Sciatic nerve (tissue), 2 donors: ENCODE measurements at regions of chr14 and their contacts with region 1.

Region 1: GRCh38 chr14:23320774-23321571 is at the start of gene PABPN1:
- DNase-seq: peak; percentile 99
- ATAC-seq: peak; percentile 98
- total RNA-seq, gene PABPN1: 135 TPM

Region 2: GRCh38 chr14:21891921-21892320 is 1429.1 kb before region 1 on chr14:
- intact Hi-C with region 1: no loop called
- DNase-seq: no peak
- ATAC-seq: no peak

Region 3: DNA sequence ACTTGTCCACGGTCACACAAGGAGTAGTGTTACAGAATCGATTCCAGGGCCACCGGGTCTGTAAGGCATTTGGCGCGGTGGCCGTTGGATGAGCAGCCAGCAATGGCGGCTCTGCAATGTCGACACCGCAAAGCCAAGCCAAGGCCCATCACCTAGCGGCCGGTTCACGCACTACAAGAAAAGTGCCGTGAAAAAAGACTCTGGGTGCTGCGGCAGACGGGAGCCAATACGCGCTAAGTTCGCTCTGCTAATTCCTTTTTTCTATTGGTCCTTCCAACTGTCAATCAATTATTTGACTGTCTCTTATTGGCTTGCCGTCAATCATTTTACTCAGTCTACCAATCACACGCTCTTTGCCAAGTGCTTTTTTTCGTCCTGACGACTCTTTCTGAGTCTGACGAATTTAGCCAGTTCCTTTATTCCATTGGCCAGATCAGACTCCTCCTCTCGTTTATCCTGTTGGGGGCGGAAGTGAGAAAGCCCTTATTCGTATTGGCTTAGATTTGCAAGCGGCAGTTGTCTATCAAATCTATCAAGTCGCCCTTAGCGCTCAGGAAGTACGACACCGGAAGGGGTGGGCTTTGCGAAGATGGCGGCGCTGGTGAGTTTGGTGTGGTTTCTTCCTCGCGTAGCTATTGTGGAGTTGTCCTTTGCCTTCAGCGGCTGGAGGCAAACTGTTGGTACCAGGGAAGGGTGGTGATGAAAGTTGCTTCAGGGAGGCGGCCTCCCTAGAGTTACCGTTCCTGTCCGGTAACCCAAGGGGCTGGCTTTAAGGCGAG is 148.3 kb after region 1 on chr14 and contains the start of gene NGDN:
- intact Hi-C with region 1: loop called (anchors 10 kb)
- DNase-seq: peak; percentile 95
- ATAC-seq: peak; percentile 98
- total RNA-seq, gene NGDN: 41.1 TPM

Region 4: DNA sequence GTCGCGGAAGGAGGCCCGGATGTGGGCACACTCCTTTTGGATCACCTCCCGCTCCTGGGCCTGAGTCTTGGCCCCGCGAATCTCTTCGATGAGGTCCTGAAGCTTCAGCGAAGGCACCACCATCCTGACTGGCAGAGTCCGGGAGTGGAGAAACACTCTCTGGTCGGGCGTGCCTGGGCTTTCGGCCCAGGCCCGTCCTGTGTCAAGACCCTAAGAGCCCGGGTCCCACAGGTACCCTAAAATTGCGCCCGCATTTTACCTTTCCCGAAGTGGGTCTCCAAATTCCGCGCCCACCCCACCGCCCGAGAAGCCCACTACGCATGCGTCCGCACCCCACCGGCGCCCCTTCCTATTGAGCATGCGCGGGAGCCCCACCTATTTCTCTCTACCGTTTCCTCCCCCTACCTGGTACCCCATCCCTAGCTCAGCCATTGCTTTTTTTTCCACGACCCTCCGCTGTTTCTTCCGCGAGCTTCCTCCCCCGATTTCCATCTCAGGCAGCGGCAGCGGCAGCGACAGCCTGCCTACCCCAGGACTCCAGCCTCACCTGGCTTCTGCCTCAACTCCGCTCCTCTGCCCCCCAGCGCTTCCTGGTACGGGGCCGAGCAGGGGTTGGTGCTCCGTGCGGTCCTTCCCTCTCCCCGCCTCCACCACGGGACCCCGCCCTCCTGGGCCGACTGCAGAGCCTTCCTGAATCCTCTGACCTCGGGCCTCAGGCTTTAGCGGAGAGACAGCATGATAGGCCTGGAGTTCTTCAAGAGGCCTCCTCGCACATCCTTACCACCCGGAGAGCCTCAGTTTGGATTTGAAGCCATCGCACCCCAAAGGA is 246.4 kb after region 1 on chr14 and contains the start of gene AP1G2:
- intact Hi-C with region 1: loop called (anchors 10 kb)
- DNase-seq: peak; percentile 89
- ATAC-seq: peak; percentile 91
- total RNA-seq, gene AP1G2: 59.6 TPM